HEK293 (cell line): ENCODE measurements at regions of chr1 and their contacts with region 1.

Region 1: GRCh38 chr1:2141036-2141435 is 53.5 kb downstream of the FAAP20 start:
- H3K4me3 ChIP-seq: no peak overlapping the region
- H3K27ac ChIP-seq: no peak overlapping the region
- H3K4me1 ChIP-seq: no peaks in the 10 kb centered on the region
- CTCF ChIP-seq: no peak

Region 2: GRCh38 chr1:2019172-2019543 is 121.9 kb before region 1 on chr1 and contains the start of gene GABRD:
- CTCF ChIA-PET with region 1: no interaction called
- POLR2A ChIA-PET with region 1: no interaction called
- H3K4me3 ChIP-seq: peak within 1 kb of the TSS; percentile 22
- H3K27ac ChIP-seq: no peak within 1 kb of the TSS
- H3K4me1 ChIP-seq: no peaks in the 10 kb centered on the region
- CTCF ChIP-seq: no peak

Region 3: DNA sequence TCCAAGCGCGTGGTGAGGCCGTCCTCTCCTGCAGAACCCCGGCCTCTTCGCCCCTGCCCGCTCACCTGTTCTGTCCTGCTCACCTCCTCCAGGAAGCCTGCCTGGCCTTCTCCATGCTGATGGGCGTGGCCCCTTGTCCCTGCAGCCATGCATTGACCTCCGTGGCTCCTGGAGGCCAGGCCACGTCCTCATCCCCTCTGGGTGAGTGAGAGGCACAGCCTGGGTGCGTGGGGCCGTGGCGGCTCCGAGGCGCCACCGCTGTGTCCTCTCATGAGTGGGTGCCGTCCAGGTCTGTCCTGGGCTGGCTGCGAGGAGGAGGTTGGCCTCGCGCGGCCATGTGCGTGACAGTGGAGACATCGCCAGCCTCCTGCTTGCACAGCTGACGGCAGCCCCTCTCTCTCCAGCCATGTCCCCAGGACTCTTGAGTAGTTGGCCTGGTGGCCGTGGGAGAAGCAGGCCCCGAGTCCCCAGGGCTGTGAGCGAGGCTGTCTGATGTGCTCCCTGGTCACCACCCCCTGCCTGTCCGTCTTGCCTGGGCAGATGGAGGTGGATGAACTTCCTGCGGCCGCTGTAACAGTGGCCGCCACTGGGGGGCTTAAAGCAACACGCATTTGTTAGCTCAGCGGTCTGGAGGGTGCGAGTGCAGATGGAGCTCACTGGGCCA is 32.7 kb before region 1 on chr1:
- CTCF ChIA-PET with region 1: interaction called, 19 read pairs
- POLR2A ChIA-PET with region 1: no interaction called
- H3K4me3 ChIP-seq: no peak overlapping the region
- H3K27ac ChIP-seq: no peak overlapping the region
- H3K4me1 ChIP-seq: no peaks in the 10 kb centered on the region
- CTCF ChIP-seq: peak; percentile 33

Region 4: GRCh38 chr1:2127187-2128145 is 13.6 kb before region 1 on chr1:
- CTCF ChIA-PET with region 1: no interaction called
- POLR2A ChIA-PET with region 1: no interaction called
- H3K4me3 ChIP-seq: no peak overlapping the region
- H3K27ac ChIP-seq: no peak overlapping the region
- H3K4me1 ChIP-seq: no peaks in the 10 kb centered on the region; the same call in 1 of the 2 replicates
- CTCF ChIP-seq: no peak

Region 5: DNA sequence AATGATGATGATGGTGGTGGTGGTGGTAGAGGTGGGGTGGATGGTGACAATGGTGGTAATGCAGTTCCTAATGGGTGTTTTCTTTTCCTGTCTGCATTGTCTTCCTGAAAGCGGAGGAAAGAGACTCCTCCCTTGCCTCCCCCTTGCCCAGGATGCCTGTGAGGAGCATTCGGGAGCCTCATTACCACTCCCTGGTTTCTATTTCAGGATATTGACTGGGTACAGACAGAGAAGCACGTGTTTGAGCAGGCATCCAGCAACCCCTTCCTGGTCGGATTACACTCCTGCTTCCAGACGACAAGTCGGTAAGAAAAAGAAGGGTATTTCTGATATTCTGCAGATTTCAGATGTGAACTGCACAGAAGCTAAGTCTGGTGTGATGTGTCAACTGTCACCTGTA is 14.8 kb after region 1 on chr1:
- CTCF ChIA-PET with region 1: interaction called, 33 read pairs
- POLR2A ChIA-PET with region 1: no interaction called
- H3K4me3 ChIP-seq: no peak overlapping the region
- H3K27ac ChIP-seq: no peak overlapping the region
- H3K4me1 ChIP-seq: no peaks in the 10 kb centered on the region
- CTCF ChIP-seq: no peak